Caco-2 (cell line): ENCODE measurements at regions of chr5 and their contacts with region 1.

Region 1: GRCh38 chr5:76867827-76868693 is 18.2 kb downstream of the S100Z start:
- DNase-seq: peak; percentile 66 to 84
- H3K4me3 ChIP-seq: no peak overlapping the region
- H3K4me3 Mint-ChIP-seq: no peak overlapping the region
- H3K27ac Mint-ChIP-seq: no peak overlapping the region
- H3K4me1 ChIP-seq: peaks cover 31% of the 10 kb centered on the region
- H3K4me1 Mint-ChIP-seq: peaks cover 20% of the 10 kb centered on the region
- H3K27me3 ChIP-seq: no peaks in the 10 kb centered on the region
- H3K27me3 Mint-ChIP-seq: no peaks in the 10 kb centered on the region
- CTCF ChIP-seq: peak; percentile 74 to 82

Region 2: GRCh38 chr5:76855961-76856360 is 12.1 kb before region 1 on chr5:
- CTCF ChIA-PET with region 1: no interaction called
- POLR2A ChIA-PET with region 1: no interaction called
- intact Hi-C with region 1: no loop called
- DNase-seq: no peak
- H3K4me3 ChIP-seq: no peak overlapping the region
- H3K4me3 Mint-ChIP-seq: no peak overlapping the region
- H3K27ac Mint-ChIP-seq: no peak overlapping the region
- H3K4me1 ChIP-seq: peaks cover 28% of the 10 kb centered on the region
- H3K4me1 Mint-ChIP-seq: peaks cover 34% of the 10 kb centered on the region
- H3K27me3 ChIP-seq: no peaks in the 10 kb centered on the region
- H3K27me3 Mint-ChIP-seq: no peaks in the 10 kb centered on the region
- CTCF ChIP-seq: no peak

Region 3: GRCh38 chr5:76942581-76942980 is 74.5 kb after region 1 on chr5:
- CTCF ChIA-PET with region 1: no interaction called
- POLR2A ChIA-PET with region 1: no interaction called
- intact Hi-C with region 1: no loop called
- DNase-seq: no peak
- H3K4me3 ChIP-seq: no peak overlapping the region
- H3K4me3 Mint-ChIP-seq: no peak overlapping the region
- H3K27ac Mint-ChIP-seq: no peak overlapping the region
- H3K4me1 ChIP-seq: peaks cover 7% of the 10 kb centered on the region; the same call in 1 of the 2 replicates
- H3K4me1 Mint-ChIP-seq: peaks cover 15% of the 10 kb centered on the region
- H3K27me3 ChIP-seq: no peaks in the 10 kb centered on the region
- H3K27me3 Mint-ChIP-seq: no peaks in the 10 kb centered on the region
- CTCF ChIP-seq: no peak

Region 4: GRCh38 chr5:77015938-77016569 is 148.0 kb after region 1 on chr5:
- CTCF ChIA-PET with region 1: interaction called, 43 read pairs
- POLR2A ChIA-PET with region 1: no interaction called
- intact Hi-C with region 1: loop called (anchors 1 kb)
- DNase-seq: peak in 1 of 2 experiments; percentile 52
- H3K4me3 ChIP-seq: no peak overlapping the region
- H3K4me3 Mint-ChIP-seq: no peak overlapping the region
- H3K27ac Mint-ChIP-seq: no peak overlapping the region
- H3K4me1 ChIP-seq: no peaks in the 10 kb centered on the region
- H3K4me1 Mint-ChIP-seq: peaks cover 8% of the 10 kb centered on the region
- H3K27me3 ChIP-seq: no peaks in the 10 kb centered on the region; the same call in 1 of the 2 replicates
- H3K27me3 Mint-ChIP-seq: no peaks in the 10 kb centered on the region
- CTCF ChIP-seq: peak; percentile 30 to 54

Region 5: GRCh38 chr5:77086689-77087483 is 218.8 kb after region 1 on chr5 and contains the start of gene ZBED3:
- CTCF ChIA-PET with region 1: no interaction called
- POLR2A ChIA-PET with region 1: no interaction called
- intact Hi-C with region 1: loop called (anchors 5 kb)
- DNase-seq: peak; percentile 77 to 84
- H3K4me3 ChIP-seq: peak within 1 kb of the TSS; percentile 71
- H3K4me3 Mint-ChIP-seq: peak within 1 kb of the TSS; percentile 99
- H3K27ac Mint-ChIP-seq: peak within 1 kb of the TSS; percentile 100
- H3K4me1 ChIP-seq: peaks cover 15% of the 10 kb centered on the region
- H3K4me1 Mint-ChIP-seq: peaks cover 6% of the 10 kb centered on the region
- H3K27me3 ChIP-seq: no peaks in the 10 kb centered on the region
- H3K27me3 Mint-ChIP-seq: no peaks in the 10 kb centered on the region
- CTCF ChIP-seq: peak; percentile 21 to 57
- total RNA-seq, gene ZBED3: 38.5 and 38.8 TPM in 2 replicates

Region 6: GRCh38 chr5:77239126-77239741 is 371.2 kb after region 1 on chr5:
- CTCF ChIA-PET with region 1: no interaction called
- POLR2A ChIA-PET with region 1: no interaction called
- intact Hi-C with region 1: loop called (anchors 1 kb)
- DNase-seq: peak in 1 of 2 experiments; percentile 25
- H3K4me3 ChIP-seq: no peak overlapping the region
- H3K4me3 Mint-ChIP-seq: no peak overlapping the region
- H3K27ac Mint-ChIP-seq: no peak overlapping the region
- H3K4me1 ChIP-seq: no peaks in the 10 kb centered on the region
- H3K4me1 Mint-ChIP-seq: peaks cover 7% of the 10 kb centered on the region
- H3K27me3 ChIP-seq: no peaks in the 10 kb centered on the region
- H3K27me3 Mint-ChIP-seq: no peaks in the 10 kb centered on the region
- CTCF ChIP-seq: peak; percentile 52

Region 7: GRCh38 chr5:77491783-77492652 is 624.0 kb after region 1 on chr5 and contains the start of gene WDR41:
- CTCF ChIA-PET with region 1: no interaction called
- POLR2A ChIA-PET with region 1: no interaction called
- intact Hi-C with region 1: loop called (anchors 5 kb)
- DNase-seq: peak; percentile 89 to 91
- H3K4me3 ChIP-seq: peak within 1 kb of the TSS; percentile 81
- H3K4me3 Mint-ChIP-seq: peak within 1 kb of the TSS; percentile 97
- H3K27ac Mint-ChIP-seq: peak within 1 kb of the TSS; percentile 99
- H3K4me1 ChIP-seq: no peaks in the 10 kb centered on the region
- H3K4me1 Mint-ChIP-seq: no peaks in the 10 kb centered on the region
- H3K27me3 ChIP-seq: no peaks in the 10 kb centered on the region
- H3K27me3 Mint-ChIP-seq: peaks cover 13% of the 10 kb centered on the region
- CTCF ChIP-seq: peak; percentile 90 to 91
- total RNA-seq, gene WDR41: 64.1 and 66.2 TPM in 2 replicates